B cell (primary cell): ENCODE measurements at regions of chr11 and their contacts with region 1.

Region 1: DNA sequence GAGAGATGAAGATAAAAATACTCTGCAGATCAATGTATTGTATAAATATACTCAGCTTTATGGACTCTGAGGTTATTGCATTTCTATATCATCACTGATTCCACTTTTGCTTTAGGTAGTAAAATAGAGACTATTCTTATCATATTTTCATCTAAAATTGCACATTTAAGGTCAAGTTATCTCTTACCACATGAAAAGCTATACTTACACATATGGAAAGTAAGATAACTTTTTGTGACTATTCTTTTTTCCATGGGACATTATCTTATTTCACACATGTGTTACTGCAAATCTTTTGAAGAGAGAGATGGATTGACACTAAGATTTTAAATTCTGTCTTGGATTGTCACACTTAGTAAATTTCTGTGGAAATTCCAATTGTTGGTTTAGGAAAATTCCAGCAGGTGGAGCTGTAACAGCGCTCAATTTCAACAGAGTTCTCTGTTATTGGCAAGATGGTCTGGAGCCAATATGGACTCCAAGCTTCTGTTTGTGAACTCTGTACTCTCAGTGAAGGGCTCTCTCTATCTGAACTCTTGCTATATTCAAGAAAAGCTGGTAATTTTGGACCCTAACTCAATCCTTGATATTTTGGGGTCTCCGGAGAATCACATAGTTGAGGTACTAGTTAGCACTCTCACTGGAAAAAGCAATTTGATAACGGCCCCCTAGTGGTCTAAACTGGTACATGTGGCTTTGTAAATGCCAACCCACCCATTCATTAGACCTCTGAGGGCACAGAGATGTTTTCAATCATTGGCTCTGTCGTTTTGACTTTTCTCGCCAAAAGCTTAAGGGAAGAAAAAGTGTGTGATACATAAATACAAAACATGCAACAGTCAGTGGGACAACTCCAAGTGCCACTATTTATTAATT is 429.7 kb downstream of the ETS1 start:
- DNase-seq: peak; percentile 82
- ATAC-seq: peak; percentile 91
- H3K4me3 ChIP-seq: peak overlapping the region in 3 of 5 experiments; percentile 22 to 37 (median 23)
- H3K4me3 Mint-ChIP-seq: peak overlapping the region; percentile 81
- H3K27ac ChIP-seq: no peak overlapping the region
- H3K27ac Mint-ChIP-seq: no peak overlapping the region
- H3K4me1 ChIP-seq: peaks cover 0 to 3% of the 10 kb centered on the region in 2 donors
- H3K4me1 Mint-ChIP-seq: peaks cover 2% of the 10 kb centered on the region
- H3K27me3 ChIP-seq: peaks cover 0 to 7% (median 0%) of the 10 kb centered on the region in 4 experiments
- H3K27me3 Mint-ChIP-seq: peaks cover 15% of the 10 kb centered on the region
- CTCF ChIP-seq: peak; percentile 99

Region 2: DNA sequence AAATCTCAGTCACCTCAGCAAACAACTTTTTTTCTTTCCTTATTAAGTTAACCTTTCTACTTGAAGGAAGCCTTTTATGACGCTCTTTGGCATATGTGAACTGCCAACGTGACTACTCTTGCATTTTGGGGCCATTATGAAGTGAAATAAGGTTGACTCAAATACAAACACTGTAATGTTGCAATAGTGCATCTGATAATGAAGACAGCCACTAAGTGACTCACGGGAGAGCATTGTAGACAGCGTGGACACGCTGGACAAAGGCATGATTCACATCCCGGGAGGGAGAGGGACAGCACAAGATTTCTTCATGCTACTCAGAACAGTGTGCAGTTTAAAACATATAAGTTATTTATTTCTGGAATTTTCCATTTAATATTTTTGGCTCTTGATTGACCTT is 131.1 kb before region 1 on chr11:
- CTCF ChIA-PET with region 1: interaction called, 23 read pairs
- POLR2A ChIA-PET with region 1: no interaction called
- intact Hi-C with region 1: loop called (anchors 1 kb)
- DNase-seq: no peak
- ATAC-seq: no peak
- H3K4me3 ChIP-seq: no peak overlapping the region
- H3K4me3 Mint-ChIP-seq: no peak overlapping the region
- H3K27ac ChIP-seq: no peak overlapping the region
- H3K27ac Mint-ChIP-seq: no peak overlapping the region
- H3K4me1 ChIP-seq: no peaks in the 10 kb centered on the region
- H3K4me1 Mint-ChIP-seq: no peaks in the 10 kb centered on the region
- H3K27me3 ChIP-seq: peaks cover 0 to 27% (median 13%) of the 10 kb centered on the region in 4 experiments
- H3K27me3 Mint-ChIP-seq: peaks cover 34% of the 10 kb centered on the region
- CTCF ChIP-seq: no peak

Region 3: DNA sequence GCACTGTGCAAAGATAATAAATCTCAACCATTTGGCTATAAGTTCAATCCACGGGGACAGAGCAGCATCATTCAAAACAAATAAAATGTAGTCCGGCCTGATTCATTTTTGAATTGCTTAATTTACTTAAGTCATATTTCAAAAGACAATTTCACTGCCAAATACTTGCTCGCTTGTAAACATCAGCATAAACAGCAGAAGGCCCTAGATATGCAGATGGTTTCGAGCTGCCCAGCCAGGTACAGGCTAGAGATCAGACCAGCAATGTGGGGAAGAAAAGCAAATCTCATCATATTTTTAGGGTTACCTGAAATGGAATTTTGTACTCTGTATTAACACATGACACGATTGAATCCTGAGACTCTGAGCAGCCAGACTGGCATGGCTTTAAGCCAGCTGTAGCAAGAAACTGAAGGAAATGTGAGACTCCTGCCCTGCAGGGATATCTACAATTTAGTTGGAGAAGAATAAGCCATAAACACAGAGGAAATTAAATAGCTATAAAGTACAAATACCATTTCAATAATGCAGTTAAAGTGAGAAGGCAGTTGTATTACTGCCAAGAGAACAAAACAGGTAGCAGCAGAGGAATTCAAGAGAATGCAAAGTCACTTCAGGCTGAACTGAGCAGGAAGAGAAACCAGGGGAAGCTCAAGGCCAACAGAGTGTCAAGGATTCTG is 10.6 kb before region 1 on chr11:
- CTCF ChIA-PET with region 1: interaction called, 28 read pairs
- POLR2A ChIA-PET with region 1: no interaction called
- intact Hi-C with region 1: no loop called
- DNase-seq: no peak
- ATAC-seq: no peak
- H3K4me3 ChIP-seq: no peak overlapping the region
- H3K4me3 Mint-ChIP-seq: no peak overlapping the region
- H3K27ac ChIP-seq: no peak overlapping the region
- H3K27ac Mint-ChIP-seq: no peak overlapping the region
- H3K4me1 ChIP-seq: no peaks in the 10 kb centered on the region
- H3K4me1 Mint-ChIP-seq: no peaks in the 10 kb centered on the region
- H3K27me3 ChIP-seq: no peaks in the 10 kb centered on the region
- H3K27me3 Mint-ChIP-seq: peaks cover 12% of the 10 kb centered on the region
- CTCF ChIP-seq: no peak

Region 4: GRCh38 chr11:128776424-128777284 is 619.0 kb after region 1 on chr11:
- CTCF ChIA-PET with region 1: interaction called, 13 read pairs
- POLR2A ChIA-PET with region 1: no interaction called
- intact Hi-C with region 1: no loop called
- DNase-seq: peak; percentile 58
- ATAC-seq: peak; percentile 35
- H3K4me3 ChIP-seq: no peak overlapping the region
- H3K4me3 Mint-ChIP-seq: no peak overlapping the region
- H3K27ac ChIP-seq: no peak overlapping the region
- H3K27ac Mint-ChIP-seq: peak overlapping the region; percentile 51
- H3K4me1 ChIP-seq: peaks cover 25 to 36% of the 10 kb centered on the region in 2 donors
- H3K4me1 Mint-ChIP-seq: peaks cover 42% of the 10 kb centered on the region
- H3K27me3 ChIP-seq: no peaks in the 10 kb centered on the region
- H3K27me3 Mint-ChIP-seq: no peaks in the 10 kb centered on the region
- CTCF ChIP-seq: peak; percentile 60

Region 5: GRCh38 chr11:128884703-128885338 is 727.2 kb after region 1 on chr11:
- CTCF ChIA-PET with region 1: interaction called, 32 read pairs
- POLR2A ChIA-PET with region 1: no interaction called
- intact Hi-C with region 1: no loop called
- DNase-seq: peak; percentile 79
- ATAC-seq: peak; percentile 82
- H3K4me3 ChIP-seq: no peak overlapping the region
- H3K4me3 Mint-ChIP-seq: no peak overlapping the region
- H3K27ac ChIP-seq: no peak overlapping the region
- H3K27ac Mint-ChIP-seq: peak overlapping the region; percentile 54
- H3K4me1 ChIP-seq: peaks cover under 1 to 7% of the 10 kb centered on the region in 2 donors
- H3K4me1 Mint-ChIP-seq: peaks cover 3% of the 10 kb centered on the region
- H3K27me3 ChIP-seq: peaks cover 0 to 73% (median 48%) of the 10 kb centered on the region in 4 experiments
- H3K27me3 Mint-ChIP-seq: peaks cover 78% of the 10 kb centered on the region
- CTCF ChIP-seq: peak; percentile 85

Region 6: DNA sequence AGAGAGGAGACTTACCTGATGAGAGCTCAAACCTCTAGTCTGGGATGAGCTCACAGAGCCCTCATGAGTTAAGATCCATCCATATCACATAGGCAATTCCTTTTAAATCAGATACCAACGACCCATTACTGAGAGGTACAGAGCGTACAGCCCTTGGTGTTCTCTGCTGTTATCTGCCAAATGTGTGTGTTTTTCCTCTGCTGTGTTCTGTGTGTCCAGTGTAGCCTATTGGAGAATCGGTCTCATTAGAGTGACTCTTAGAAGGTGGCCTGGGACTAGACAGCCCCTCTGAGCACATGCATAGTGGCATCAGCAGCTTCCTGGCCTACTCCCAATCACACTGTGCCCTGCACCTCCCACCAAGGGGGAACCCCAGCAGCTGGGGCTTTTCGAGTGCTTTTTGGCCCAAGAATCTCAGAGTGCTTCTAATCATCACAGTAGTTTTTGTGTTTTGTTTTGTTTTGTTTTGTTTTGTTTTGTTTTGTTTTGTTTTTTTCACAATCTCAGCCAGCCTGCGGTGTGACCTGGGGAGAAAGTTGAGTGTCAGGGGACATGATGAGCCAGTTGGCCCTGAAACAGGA is 759.6 kb after region 1 on chr11:
- CTCF ChIA-PET with region 1: no interaction called
- POLR2A ChIA-PET with region 1: no interaction called
- intact Hi-C with region 1: no loop called
- DNase-seq: no peak
- ATAC-seq: no peak
- H3K4me3 ChIP-seq: no peak overlapping the region
- H3K4me3 Mint-ChIP-seq: no peak overlapping the region
- H3K27ac ChIP-seq: no peak overlapping the region
- H3K27ac Mint-ChIP-seq: no peak overlapping the region
- H3K4me1 ChIP-seq: peaks cover 0 to 4% of the 10 kb centered on the region in 2 donors
- H3K4me1 Mint-ChIP-seq: peaks cover 5% of the 10 kb centered on the region
- H3K27me3 ChIP-seq: peaks cover 0 to 21% (median 0%) of the 10 kb centered on the region in 4 experiments
- H3K27me3 Mint-ChIP-seq: peaks cover 41% of the 10 kb centered on the region
- CTCF ChIP-seq: no peak

Region 7: DNA sequence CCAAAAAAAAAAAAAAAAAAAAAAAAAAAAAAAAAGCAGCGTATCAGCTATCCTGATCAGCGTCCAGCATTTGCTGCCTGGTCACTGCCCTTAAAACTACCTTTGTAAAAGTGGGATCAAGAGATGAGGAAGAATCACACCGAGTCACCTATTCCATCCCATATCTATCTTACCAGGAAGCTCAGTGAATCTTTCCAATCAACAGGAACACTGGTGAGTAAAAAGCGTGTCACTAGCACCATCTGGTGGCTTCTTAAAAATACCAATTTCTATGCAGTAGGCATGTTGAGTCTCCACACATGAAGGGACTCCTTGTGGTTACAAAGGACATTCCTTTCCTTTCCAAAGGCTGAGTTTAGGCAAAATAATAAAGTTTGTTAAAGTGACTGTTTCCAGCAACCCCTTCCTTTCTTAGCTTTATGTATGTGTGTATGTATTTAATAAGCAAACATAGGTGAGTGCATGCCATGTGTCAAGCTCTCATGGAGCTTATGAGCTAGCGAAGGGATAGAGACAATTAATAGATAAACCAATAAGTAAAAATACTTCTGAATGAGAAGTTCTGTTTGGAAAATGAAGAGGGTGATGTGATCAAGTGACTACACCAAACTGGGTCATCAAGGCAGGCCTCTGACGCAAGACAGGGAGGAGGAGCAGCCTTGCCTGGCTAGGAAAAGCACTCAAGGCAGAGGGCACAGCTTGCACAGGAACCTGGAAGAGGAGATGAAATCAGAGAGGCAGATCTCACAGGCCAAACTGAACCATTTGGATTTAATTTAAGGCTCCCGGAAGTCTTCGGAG is 798.9 kb after region 1 on chr11:
- CTCF ChIA-PET with region 1: interaction called, 69 read pairs
- POLR2A ChIA-PET with region 1: no interaction called
- intact Hi-C with region 1: loop called (anchors 1 kb)
- DNase-seq: peak; percentile 73
- ATAC-seq: no peak
- H3K4me3 ChIP-seq: no peak overlapping the region
- H3K4me3 Mint-ChIP-seq: no peak overlapping the region
- H3K27ac ChIP-seq: no peak overlapping the region
- H3K27ac Mint-ChIP-seq: no peak overlapping the region
- H3K4me1 ChIP-seq: peaks cover 0 to 4% of the 10 kb centered on the region in 2 donors
- H3K4me1 Mint-ChIP-seq: peaks cover 2% of the 10 kb centered on the region
- H3K27me3 ChIP-seq: peaks cover 0 to 13% (median 1%) of the 10 kb centered on the region in 4 experiments
- H3K27me3 Mint-ChIP-seq: peaks cover 30% of the 10 kb centered on the region
- CTCF ChIP-seq: peak; percentile 86